CD8-positive, alpha-beta memory T cell (primary cell): ENCODE measurements at regions of chr22 and their contacts with region 1.

Region 1: GRCh38 chr22:23913661-23914353 is 19.6 kb downstream of the MIF start:
- DNase-seq: peak; percentile 97 to 99 (median 98)
- H3K4me3 ChIP-seq: peak overlapping the region; percentile 78
- H3K4me3 Mint-ChIP-seq: peak overlapping the region; percentile 84 to 97 (median 94)
- H3K27ac ChIP-seq: peak overlapping the region; percentile 75
- H3K27ac Mint-ChIP-seq: peak overlapping the region; percentile 82 to 99 (median 95)
- H3K4me1 ChIP-seq: peaks cover 6% of the 10 kb centered on the region
- H3K4me1 Mint-ChIP-seq: peaks cover 13 to 16% (median 15%) of the 10 kb centered on the region in 3 donors
- H3K27me3 ChIP-seq: no peaks in the 10 kb centered on the region
- H3K27me3 Mint-ChIP-seq: peaks cover 0 to 2% of the 10 kb centered on the region in 2 donors

Region 2: GRCh38 chr22:23893943-23894709 is 19.7 kb before region 1 on chr22 and contains the start of gene MIF:
- CTCF ChIA-PET with region 1: interaction called, 21 read pairs
- POLR2A ChIA-PET with region 1: interaction called, 34 read pairs
- DNase-seq: peak; percentile 91 to 96 (median 94)
- H3K4me3 ChIP-seq: peak within 1 kb of the TSS; percentile 90
- H3K4me3 Mint-ChIP-seq: peak within 1 kb of the TSS; percentile 90 to 97 (median 94)
- H3K27ac ChIP-seq: peak within 1 kb of the TSS; percentile 95
- H3K27ac Mint-ChIP-seq: peak within 1 kb of the TSS; percentile 93 to 99 (median 96)
- H3K4me1 ChIP-seq: peaks cover 20% of the 10 kb centered on the region
- H3K4me1 Mint-ChIP-seq: peaks cover 25 to 34% (median 27%) of the 10 kb centered on the region in 3 donors
- H3K27me3 ChIP-seq: no peaks in the 10 kb centered on the region
- H3K27me3 Mint-ChIP-seq: peaks cover 0 to 2% of the 10 kb centered on the region in 2 donors
- total RNA-seq, gene MIF: 804 to 830 TPM